ENCODE measurements at regions of chr5 and their contacts with region 1.

Region 1: DNA sequence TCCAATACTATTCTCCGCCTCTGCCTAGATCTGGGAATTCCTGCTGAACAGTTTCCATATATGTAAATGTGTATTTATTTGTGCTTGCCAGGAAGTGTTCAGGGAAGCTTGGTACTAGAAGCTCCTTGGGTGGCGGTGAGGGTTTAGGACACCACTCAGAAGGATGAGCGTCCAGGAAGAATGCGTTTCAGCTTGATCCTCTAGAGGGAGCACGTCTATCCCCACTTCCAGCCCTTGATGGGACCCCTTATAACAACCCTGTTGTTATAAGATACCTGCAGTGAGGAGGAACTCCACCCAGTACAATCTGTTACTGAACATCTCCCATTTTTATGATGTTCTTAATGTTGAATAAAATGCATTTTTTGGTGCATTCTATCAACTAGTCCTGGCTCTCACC is 88.9 kb downstream of the CYFIP2 start:
- DNase-seq: no peak
- H3K4me3 ChIP-seq: no peak overlapping the region
- CTCF ChIP-seq: peak; percentile 34

Region 2: GRCh38 chr5:157335534-157336422 is 19.0 kb before region 1 on chr5:
- CTCF ChIA-PET with region 1: interaction called, 92 read pairs
- POLR2A ChIA-PET with region 1: no interaction called
- DNase-seq: peak; percentile 28
- H3K4me3 ChIP-seq: no peak overlapping the region
- CTCF ChIP-seq: no peak

Region 3: GRCh38 chr5:157342822-157343402 is 11.9 kb before region 1 on chr5:
- CTCF ChIA-PET with region 1: interaction called, 92 read pairs
- POLR2A ChIA-PET with region 1: no interaction called
- DNase-seq: no peak
- H3K4me3 ChIP-seq: no peak overlapping the region
- CTCF ChIP-seq: peak; percentile 58

Measured in AG04449 (cell line).